ENCODE measurements at regions of chr6 and their contacts with region 1.

Region 1: DNA sequence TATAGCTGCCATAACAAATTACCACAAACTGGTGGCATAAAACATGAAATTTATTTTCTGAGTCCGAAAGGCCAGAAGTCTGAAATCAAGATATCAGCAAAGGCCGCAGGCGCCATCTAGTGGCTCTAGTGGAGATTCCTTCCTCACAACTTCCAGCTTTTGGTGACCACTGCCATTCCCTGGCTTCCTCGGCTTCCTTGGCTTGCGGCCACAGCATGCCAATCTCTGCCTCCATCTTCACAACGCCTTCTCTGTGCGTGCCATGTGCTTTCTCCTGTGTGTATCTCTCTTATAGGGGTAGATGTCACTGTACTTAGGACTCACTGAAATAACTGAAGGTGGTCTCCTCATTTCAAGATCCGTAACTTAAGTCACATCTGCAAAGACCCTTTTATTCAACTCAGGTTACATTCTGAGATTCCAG is 5.4 kb upstream of the PLAGL1 start:
- DNase-seq: no peak
- H3K4me3 ChIP-seq: no peak overlapping the region
- H3K27ac ChIP-seq: no peak overlapping the region
- H3K4me1 ChIP-seq: peaks cover 0 to 2% (median 0%) of the 10 kb centered on the region in 3 donors
- H3K27me3 ChIP-seq: no peaks in the 10 kb centered on the region
- CTCF ChIP-seq: peak; percentile 79 to 89 (median 88)
- POLR2A ChIP-seq: no peak

Region 2: GRCh38 chr6:143570147-143570853 is 443.2 kb before region 1 on chr6:
- intact Hi-C with region 1: loop called (anchors 5 kb)
- DNase-seq: no peak
- H3K4me3 ChIP-seq: no peak overlapping the region
- H3K27ac ChIP-seq: no peak overlapping the region
- H3K4me1 ChIP-seq: no peaks in the 10 kb centered on the region
- H3K27me3 ChIP-seq: no peaks in the 10 kb centered on the region
- CTCF ChIP-seq: no peak
- POLR2A ChIP-seq: no peak

Region 3: GRCh38 chr6:143940011-143940597 is 73.4 kb before region 1 on chr6:
- intact Hi-C with region 1: loop called (anchors 5 kb)
- DNase-seq: no peak
- H3K4me3 ChIP-seq: no peak overlapping the region
- H3K27ac ChIP-seq: no peak overlapping the region
- H3K4me1 ChIP-seq: peaks cover 0 to 9% (median 0%) of the 10 kb centered on the region in 3 donors
- H3K27me3 ChIP-seq: no peaks in the 10 kb centered on the region
- CTCF ChIP-seq: peak; percentile 47 to 80 (median 62)
- POLR2A ChIP-seq: no peak